Activated CD4-positive, alpha-beta T cell treated with anti-CD3 and anti-CD28 coated beads, Interleukin-2, amount 10 ng/mL, durations not matched to agents 24 days and 14 days (primary cell): ENCODE measurements at regions of chr12 and their contacts with region 1.

Region 1: GRCh38 chr12:123075646-123076171 is 75.2 kb downstream of the PITPNM2 start:
- DNase-seq: peak; percentile 95
- H3K4me3 Mint-ChIP-seq: peak overlapping the region; percentile 85
- H3K27ac Mint-ChIP-seq: peak overlapping the region; percentile 98
- H3K4me1 Mint-ChIP-seq: peaks cover 44% of the 10 kb centered on the region
- H3K27me3 Mint-ChIP-seq: no peaks in the 10 kb centered on the region

Region 2: DNA sequence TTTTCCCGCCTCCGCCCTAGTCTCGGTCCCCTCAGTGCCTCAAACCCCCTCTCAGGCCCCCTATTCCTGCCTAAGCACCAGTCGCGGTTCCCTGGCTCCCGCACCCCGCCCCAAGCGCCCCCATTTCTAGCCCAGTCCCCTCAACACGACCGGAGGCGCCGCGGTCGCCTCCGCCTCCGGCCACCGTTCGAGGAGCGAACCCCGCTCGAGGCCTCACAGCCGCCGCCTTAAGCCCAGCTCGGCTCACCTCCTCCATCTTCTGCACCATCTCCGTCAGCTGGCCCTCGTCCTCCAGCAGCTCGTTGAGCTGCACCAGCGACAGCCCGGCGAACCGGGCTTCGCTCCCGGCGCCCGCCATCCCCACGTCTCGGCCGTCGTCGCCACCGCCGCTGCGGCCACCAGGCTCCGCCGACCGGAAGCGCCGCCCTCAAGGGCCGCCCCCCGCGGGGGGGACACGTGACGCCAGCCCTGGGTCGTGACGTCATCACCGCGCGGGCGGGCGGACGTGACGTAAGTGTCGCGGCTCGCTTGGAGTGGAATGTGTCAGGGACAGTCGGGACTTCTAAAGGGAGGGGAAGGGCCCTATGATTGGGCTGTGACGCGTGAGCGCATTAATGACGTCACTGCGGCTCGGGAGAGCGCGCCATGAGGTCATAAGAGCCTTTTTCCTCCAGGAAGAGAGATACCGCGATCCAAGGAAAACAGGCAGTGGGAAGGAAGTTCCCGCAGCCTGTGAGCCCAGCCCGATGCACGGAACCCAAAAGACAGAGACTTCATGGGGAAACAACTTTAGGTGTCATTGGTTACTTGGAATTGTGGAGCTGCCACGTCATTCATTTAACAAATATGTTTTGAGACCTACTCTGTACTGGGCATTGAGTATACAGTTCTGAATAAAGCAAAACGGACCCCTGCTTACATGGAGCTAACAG is 179.7 kb before region 1 on chr12 and contains the start of gene VPS37B:
- intact Hi-C with region 1: loop called (anchors 5 kb)
- DNase-seq: peak; percentile 97
- H3K4me3 Mint-ChIP-seq: peak within 1 kb of the TSS; percentile 94
- H3K27ac Mint-ChIP-seq: peak within 1 kb of the TSS; percentile 90
- H3K4me1 Mint-ChIP-seq: peaks cover 73% of the 10 kb centered on the region
- H3K27me3 Mint-ChIP-seq: peaks cover 6% of the 10 kb centered on the region
- total RNA-seq, gene VPS37B: 9.2 and 9.5 TPM in 2 replicates

Region 3: DNA sequence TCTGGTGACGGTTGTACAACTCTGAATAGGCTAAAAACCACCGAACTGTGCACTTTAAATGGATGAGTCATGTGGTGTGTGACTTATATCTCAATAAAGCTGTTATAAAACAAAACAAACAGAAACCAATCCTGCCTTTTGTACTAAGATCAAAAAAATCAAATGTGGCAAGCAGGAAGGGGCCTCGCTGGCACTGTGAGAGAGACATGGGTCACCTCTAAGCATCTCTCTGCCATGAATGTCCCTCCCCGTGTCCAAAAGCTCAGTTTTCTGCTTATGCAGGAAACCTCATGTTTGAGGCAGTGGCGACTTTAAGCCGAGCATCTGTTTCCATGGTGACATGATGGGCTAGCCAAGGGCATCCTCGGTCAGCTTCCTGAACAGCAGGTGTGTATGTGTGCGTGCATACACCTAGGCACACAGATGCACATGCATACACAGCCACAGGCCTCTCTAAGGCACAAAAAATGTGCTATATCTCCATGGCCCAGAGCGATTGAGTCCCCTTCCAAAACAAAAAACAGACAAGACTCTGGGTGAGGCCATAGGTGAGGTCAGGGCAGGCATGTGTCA is 50.8 kb before region 1 on chr12:
- intact Hi-C with region 1: loop called (anchors 1 kb)
- DNase-seq: peak; percentile 68
- H3K4me3 Mint-ChIP-seq: no peak overlapping the region
- H3K27ac Mint-ChIP-seq: peak overlapping the region; percentile 76
- H3K4me1 Mint-ChIP-seq: peaks cover 10% of the 10 kb centered on the region
- H3K27me3 Mint-ChIP-seq: no peaks in the 10 kb centered on the region

Region 4: DNA sequence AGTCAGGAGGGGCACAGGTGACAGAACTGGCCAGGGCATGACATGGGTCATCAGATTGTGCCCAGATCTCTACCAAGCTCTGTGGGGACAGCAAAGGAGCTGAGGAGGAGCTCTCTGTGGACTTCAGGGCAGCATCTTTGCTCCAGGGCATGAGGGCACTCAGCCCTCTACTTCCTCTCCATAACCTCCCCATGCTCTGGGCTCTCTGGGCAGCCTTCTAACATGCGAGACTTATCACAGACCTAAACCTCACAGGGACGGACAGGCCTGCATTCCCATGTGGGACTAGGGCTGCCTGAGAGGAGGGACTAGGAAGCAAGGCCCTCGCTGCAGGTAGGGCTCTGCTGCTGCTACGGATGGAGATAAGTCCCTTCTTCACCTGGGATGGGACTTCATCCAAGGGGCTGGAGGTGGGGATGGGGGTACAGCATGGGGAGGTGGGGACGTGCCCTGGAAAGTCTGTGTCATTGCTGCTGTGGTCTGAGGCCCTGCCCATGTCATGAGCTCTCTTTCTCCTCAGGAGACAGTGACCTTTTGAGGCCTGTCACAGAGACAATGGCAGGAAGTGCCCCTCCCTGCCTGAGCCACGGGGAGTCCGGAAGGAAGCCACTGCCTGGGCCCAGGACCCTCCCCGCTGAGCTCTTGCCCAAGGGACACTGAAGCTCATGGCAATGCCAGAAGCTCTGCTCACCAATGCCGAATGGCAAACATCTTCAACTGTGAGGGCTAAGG is 31.1 kb after region 1 on chr12:
- intact Hi-C with region 1: loop called (anchors 1 kb)
- DNase-seq: peak; percentile 92
- H3K4me3 Mint-ChIP-seq: peak overlapping the region; percentile 44
- H3K27ac Mint-ChIP-seq: peak overlapping the region; percentile 94
- H3K4me1 Mint-ChIP-seq: peaks cover 50% of the 10 kb centered on the region
- H3K27me3 Mint-ChIP-seq: no peaks in the 10 kb centered on the region

Region 5: GRCh38 chr12:123150744-123151456 is 75.2 kb after region 1 on chr12 and contains the start of gene PITPNM2:
- intact Hi-C with region 1: loop called (anchors 1 kb)
- DNase-seq: peak; percentile 91
- H3K4me3 Mint-ChIP-seq: peak within 1 kb of the TSS; percentile 85
- H3K27ac Mint-ChIP-seq: peak within 1 kb of the TSS; percentile 86
- H3K4me1 Mint-ChIP-seq: peaks cover 32% of the 10 kb centered on the region
- H3K27me3 Mint-ChIP-seq: peaks cover 15% of the 10 kb centered on the region
- total RNA-seq, gene PITPNM2: 19.0 and 19.2 TPM in 2 replicates

Region 6: GRCh38 chr12:123436017-123436964 is 360.6 kb after region 1 on chr12 and contains the start of gene RILPL2:
- intact Hi-C with region 1: loop called (anchors 1 kb)
- DNase-seq: peak; percentile 98
- H3K4me3 Mint-ChIP-seq: peak within 1 kb of the TSS; percentile 99
- H3K27ac Mint-ChIP-seq: peak within 1 kb of the TSS; percentile 99
- H3K4me1 Mint-ChIP-seq: peaks cover 35% of the 10 kb centered on the region
- H3K27me3 Mint-ChIP-seq: no peaks in the 10 kb centered on the region
- total RNA-seq, gene RILPL2: 17.2 TPM in 2 replicates